Body of pancreas (tissue), 4 donors: ENCODE measurements at regions of chr15 and their contacts with region 1.

Region 1: GRCh38 chr15:91055548-91056331 is 33.3 kb upstream of the VPS33B start:
- DNase-seq: peak; percentile 67 to 78 (median 74)
- ATAC-seq: peak; percentile 82
- H3K4me3 ChIP-seq: no peak overlapping the region
- H3K27ac ChIP-seq: no peak overlapping the region
- H3K4me1 ChIP-seq: no peaks in the 10 kb centered on the region
- H3K27me3 ChIP-seq: no peaks in the 10 kb centered on the region
- CTCF ChIP-seq: peak; percentile 44 to 91 (median 83)
- POLR2A ChIP-seq: no peak

Region 2: DNA sequence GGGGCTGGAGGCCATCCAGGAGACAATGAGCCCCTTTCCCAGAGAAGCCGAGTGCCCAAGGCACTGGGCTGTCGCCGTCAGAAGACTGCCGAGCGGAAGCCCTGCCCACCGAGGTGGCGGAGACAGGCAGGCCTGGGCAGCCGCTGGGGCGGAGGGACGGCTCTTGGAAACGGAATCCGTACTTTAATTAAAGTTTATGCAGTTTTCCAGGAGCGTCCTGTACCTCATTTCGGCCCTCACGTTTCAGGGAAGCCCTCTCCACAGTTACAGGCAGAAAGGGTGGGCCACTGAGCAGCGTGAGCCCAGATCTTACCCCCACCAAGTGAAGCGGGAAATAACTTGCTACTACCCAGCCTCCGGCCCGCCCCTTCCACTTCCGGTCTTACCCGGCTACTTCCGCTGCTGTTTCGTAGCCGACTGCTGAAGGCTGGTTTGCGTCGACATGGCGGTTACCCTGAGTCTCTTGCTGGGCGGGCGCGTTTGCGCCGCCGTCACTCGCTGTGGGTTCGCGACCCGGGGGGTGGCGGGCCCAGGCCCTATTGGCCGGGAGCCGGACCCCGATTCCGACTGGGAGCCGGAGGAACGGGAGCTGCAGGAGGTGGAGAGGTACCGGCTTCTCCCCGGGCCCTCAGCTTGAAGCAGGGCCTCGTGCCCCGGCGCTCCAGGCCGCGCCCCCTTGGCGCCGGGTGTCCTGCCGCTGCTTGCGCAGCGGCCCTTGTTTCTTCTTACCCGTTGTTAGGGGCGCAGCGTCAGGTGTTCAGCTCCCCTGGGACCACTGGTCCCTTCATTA is 790.3 kb before region 1 on chr15 and contains the start of gene NGRN:
- intact Hi-C with region 1: no loop called
- DNase-seq: peak; percentile 87 to 93 (median 90)
- ATAC-seq: peak; percentile 94
- H3K4me3 ChIP-seq: peak within 1 kb of the TSS; percentile 47 to 60
- H3K27ac ChIP-seq: peak within 1 kb of the TSS; percentile 88 to 95 (median 92)
- H3K4me1 ChIP-seq: peaks cover 42% of the 10 kb centered on the region
- H3K27me3 ChIP-seq: no peaks in the 10 kb centered on the region
- CTCF ChIP-seq: no peak
- POLR2A ChIP-seq: peak; percentile 69 to 89 (median 87)
- total RNA-seq, gene NGRN: 27.4 to 27.8 TPM

Region 3: GRCh38 chr15:91224755-91225380 is 169.1 kb after region 1 on chr15:
- intact Hi-C with region 1: loop called (anchors 5 kb)
- DNase-seq: peak in 2 of 4 donors; percentile 16 to 47
- ATAC-seq: peak; percentile 64
- H3K4me3 ChIP-seq: no peak overlapping the region
- H3K27ac ChIP-seq: no peak overlapping the region
- H3K4me1 ChIP-seq: no peaks in the 10 kb centered on the region
- H3K27me3 ChIP-seq: no peaks in the 10 kb centered on the region
- CTCF ChIP-seq: peak; percentile 57 to 87 (median 75)
- POLR2A ChIP-seq: no peak

Region 4: DNA sequence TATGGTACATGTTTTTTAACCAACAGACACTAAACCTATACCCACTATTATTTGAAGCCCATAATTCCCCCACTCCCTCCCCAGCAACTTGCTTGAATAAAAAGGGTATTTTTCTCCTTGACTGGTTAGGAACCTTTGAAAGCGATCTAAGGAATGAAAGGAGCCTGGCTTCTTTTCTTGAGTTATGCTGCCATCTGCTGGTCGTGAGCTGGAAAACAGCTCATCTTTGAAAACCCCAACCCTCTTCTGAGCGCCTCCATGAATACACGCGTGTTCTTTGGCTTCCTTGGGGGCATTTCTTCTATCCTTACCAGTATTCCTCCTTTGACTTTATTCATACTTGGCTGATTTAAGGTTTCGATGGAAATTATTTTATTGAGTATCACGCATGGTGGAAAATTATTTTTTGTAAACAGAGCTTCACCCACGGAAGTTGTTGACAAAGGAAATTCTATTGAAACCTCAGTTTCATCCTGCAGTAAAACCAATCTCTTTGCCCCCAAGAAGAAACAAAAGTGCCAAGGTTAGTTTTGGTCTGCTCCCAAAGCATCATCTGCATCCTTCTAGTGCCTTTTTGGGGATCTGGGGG is 215.9 kb after region 1 on chr15:
- intact Hi-C with region 1: loop called (anchors 5 kb)
- DNase-seq: peak; percentile 53 to 66 (median 58)
- ATAC-seq: peak; percentile 80
- H3K4me3 ChIP-seq: no peak overlapping the region
- H3K27ac ChIP-seq: no peak overlapping the region
- H3K4me1 ChIP-seq: no peaks in the 10 kb centered on the region
- H3K27me3 ChIP-seq: no peaks in the 10 kb centered on the region
- CTCF ChIP-seq: peak; percentile 42 to 77 (median 71)
- POLR2A ChIP-seq: no peak